HEK293 (cell line): ENCODE measurements at regions of chr2 and their contacts with region 1.

Region 1: DNA sequence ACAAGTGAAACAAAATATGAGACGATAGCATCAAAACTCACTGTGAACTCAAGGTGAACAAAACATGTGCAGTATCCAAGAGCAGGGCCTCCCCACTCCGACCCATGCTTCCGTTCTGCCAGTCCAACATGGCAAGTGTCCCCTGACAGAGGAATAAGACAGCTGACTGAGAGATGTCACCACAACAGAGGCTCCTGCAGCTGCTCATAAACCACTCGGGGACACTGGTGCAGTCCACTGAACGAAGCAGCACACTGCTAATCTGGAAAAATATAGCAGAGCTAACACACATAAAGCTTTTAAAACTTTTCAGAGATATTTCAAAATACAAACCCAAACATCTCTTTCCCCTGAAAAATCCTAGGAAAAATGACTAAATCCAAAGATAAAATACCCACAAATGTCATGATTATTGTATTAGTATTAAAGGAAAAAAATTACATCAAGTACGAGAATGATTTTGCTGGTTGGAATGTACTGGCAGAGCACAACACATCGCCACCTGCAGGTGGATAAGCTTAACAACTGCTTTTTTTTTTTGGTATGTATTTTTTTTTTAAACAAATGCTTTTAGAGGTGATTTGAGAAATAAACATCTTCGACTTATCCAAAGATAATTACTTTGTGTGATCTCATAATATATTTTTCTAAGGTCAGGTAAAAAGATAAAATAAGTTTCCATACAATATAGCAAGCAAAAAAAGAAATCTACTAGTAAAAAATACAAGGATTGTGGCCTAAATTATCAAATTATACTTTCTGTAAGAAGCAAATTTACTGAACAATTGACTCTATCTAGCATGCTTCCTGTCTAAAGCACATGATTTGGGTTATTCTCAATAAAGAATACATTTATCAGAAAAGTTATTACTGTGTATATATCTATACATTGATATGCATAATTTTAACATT is 18.6 kb downstream of the THADA start:
- H3K4me3 ChIP-seq: no peak overlapping the region
- H3K27ac ChIP-seq: no peak overlapping the region
- H3K4me1 ChIP-seq: no peaks in the 10 kb centered on the region
- CTCF ChIP-seq: no peak

Region 2: GRCh38 chr2:43566461-43566729 is 10.8 kb before region 1 on chr2:
- CTCF ChIA-PET with region 1: interaction called, 35 read pairs
- POLR2A ChIA-PET with region 1: no interaction called
- H3K4me3 ChIP-seq: no peak overlapping the region
- H3K27ac ChIP-seq: no peak overlapping the region
- H3K4me1 ChIP-seq: no peaks in the 10 kb centered on the region
- CTCF ChIP-seq: no peak

Region 3: GRCh38 chr2:43595603-43596412 is 18.6 kb after region 1 on chr2 and contains the start of gene THADA:
- CTCF ChIA-PET with region 1: interaction called, 8 read pairs
- POLR2A ChIA-PET with region 1: interaction called, 16 read pairs
- H3K4me3 ChIP-seq: peak within 1 kb of the TSS; percentile 81
- H3K27ac ChIP-seq: peak within 1 kb of the TSS; percentile 73
- H3K4me1 ChIP-seq: 0 out of 2 replicates have a peak, but pooled peaks cover 4% of the 10 kb centered on the region
- CTCF ChIP-seq: no peak

Region 4: DNA sequence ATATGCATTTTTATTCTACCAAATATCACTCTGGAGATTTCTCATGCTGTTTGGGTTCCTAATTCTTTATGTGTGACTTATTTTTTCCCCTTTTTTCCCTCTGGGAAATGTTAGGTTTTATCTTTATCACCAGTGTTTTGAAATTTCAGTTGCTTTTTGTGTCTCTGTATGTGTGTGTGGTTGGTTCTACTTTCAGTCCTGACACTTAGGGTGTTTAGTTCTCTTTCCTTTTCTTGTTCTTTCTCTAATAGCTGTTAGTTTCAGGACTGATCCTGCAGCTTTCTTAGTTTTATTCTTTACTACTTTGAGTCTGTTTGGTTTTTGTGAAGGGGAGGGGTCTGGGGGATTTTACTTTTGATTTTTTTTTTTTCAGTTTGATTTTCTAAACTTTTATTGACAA is 614.5 kb after region 1 on chr2:
- CTCF ChIA-PET with region 1: no interaction called
- POLR2A ChIA-PET with region 1: no interaction called
- H3K4me3 ChIP-seq: no peak overlapping the region
- H3K27ac ChIP-seq: no peak overlapping the region
- H3K4me1 ChIP-seq: no peaks in the 10 kb centered on the region
- CTCF ChIP-seq: no peak